Activated CD4-positive, alpha-beta T cell treated with anti-CD3 and anti-CD28 coated beads for 36 hours (primary cell): ENCODE measurements at regions of chr5 and their contacts with region 1.

Region 1: GRCh38 chr5:81971712-81972495 is at the start of gene ATG10:
- DNase-seq: peak; percentile 93
- ATAC-seq: peak; percentile 95
- H3K4me3 Mint-ChIP-seq: peak within 1 kb of the TSS; percentile 96
- H3K27ac Mint-ChIP-seq: peak within 1 kb of the TSS; percentile 99
- H3K4me1 Mint-ChIP-seq: peaks cover 22% of the 10 kb centered on the region
- H3K27me3 Mint-ChIP-seq: no peaks in the 10 kb centered on the region
- total RNA-seq, gene ATG10: 4.7 to 8.1 TPM

Region 2: GRCh38 chr5:81006947-81007636 is 964.8 kb before region 1 on chr5:
- CTCF ChIA-PET with region 1: no interaction called
- POLR2A ChIA-PET with region 1: no interaction called
- intact Hi-C with region 1: loop called in 1 of 2 experiments (anchors 10 kb)
- DNase-seq: peak; percentile 71
- ATAC-seq: peak; percentile 83
- H3K4me3 Mint-ChIP-seq: peak overlapping the region; percentile 77
- H3K27ac Mint-ChIP-seq: peak overlapping the region; percentile 96
- H3K4me1 Mint-ChIP-seq: peaks cover 82% of the 10 kb centered on the region
- H3K27me3 Mint-ChIP-seq: no peaks in the 10 kb centered on the region

Region 3: DNA sequence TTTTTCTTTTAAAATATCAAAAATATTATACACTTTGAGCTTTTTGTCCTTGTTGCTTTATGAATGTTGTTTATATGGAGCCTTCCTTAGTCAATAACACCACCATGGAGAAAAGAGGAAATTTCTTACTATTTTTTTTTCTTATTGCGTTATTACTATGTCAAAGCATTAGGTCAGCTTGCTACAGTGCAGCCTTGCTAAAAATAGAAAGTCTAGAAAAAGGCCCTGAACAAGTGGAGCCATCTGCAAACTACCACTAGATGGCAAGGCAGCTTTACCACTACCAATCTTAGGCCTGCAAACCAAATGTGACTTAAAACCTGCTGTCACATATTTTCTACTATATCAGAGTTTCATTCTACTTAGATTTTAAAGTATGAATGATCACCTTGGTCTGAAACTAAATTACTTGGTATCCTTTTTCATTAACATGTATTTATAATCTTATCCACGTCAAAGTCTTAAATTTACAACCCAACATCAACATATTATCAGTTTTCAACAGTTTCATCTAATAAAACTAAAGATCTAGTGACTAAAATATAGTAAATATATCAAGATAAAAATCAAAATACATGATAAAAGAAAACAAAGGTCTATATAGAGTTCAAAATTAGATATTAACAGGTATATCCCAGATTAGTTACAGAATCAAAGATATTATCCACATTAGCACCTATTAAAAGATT is 464.9 kb before region 1 on chr5:
- CTCF ChIA-PET with region 1: no interaction called
- POLR2A ChIA-PET with region 1: no interaction called
- intact Hi-C with region 1: loop called in 1 of 2 experiments (anchors 2 kb)
- DNase-seq: peak; percentile 52
- ATAC-seq: peak; percentile 100
- H3K4me3 Mint-ChIP-seq: no peak overlapping the region
- H3K27ac Mint-ChIP-seq: no peak overlapping the region
- H3K4me1 Mint-ChIP-seq: no peaks in the 10 kb centered on the region
- H3K27me3 Mint-ChIP-seq: no peaks in the 10 kb centered on the region

Region 4: GRCh38 chr5:81808106-81808505 is 163.8 kb before region 1 on chr5:
- CTCF ChIA-PET with region 1: no interaction called
- POLR2A ChIA-PET with region 1: no interaction called
- intact Hi-C with region 1: no loop called
- DNase-seq: no peak
- ATAC-seq: no peak
- H3K4me3 Mint-ChIP-seq: no peak overlapping the region
- H3K27ac Mint-ChIP-seq: no peak overlapping the region
- H3K4me1 Mint-ChIP-seq: peaks cover 9% of the 10 kb centered on the region
- H3K27me3 Mint-ChIP-seq: no peaks in the 10 kb centered on the region

Region 5: GRCh38 chr5:81851481-81852178 is 120.3 kb before region 1 on chr5:
- CTCF ChIA-PET with region 1: no interaction called
- POLR2A ChIA-PET with region 1: interaction called, 3 read pairs
- intact Hi-C with region 1: loop called (anchors 1 to 2 kb)
- DNase-seq: peak; percentile 93
- ATAC-seq: peak; percentile 86
- H3K4me3 Mint-ChIP-seq: peak overlapping the region; percentile 78
- H3K27ac Mint-ChIP-seq: peak overlapping the region; percentile 94
- H3K4me1 Mint-ChIP-seq: peaks cover 42% of the 10 kb centered on the region
- H3K27me3 Mint-ChIP-seq: no peaks in the 10 kb centered on the region

Region 6: GRCh38 chr5:82165740-82166530 is 194.0 kb after region 1 on chr5:
- CTCF ChIA-PET with region 1: interaction called, 3 read pairs
- POLR2A ChIA-PET with region 1: no interaction called
- intact Hi-C with region 1: loop called in 1 of 2 experiments (anchors 5 kb)
- DNase-seq: peak; percentile 53
- ATAC-seq: peak; percentile 99
- H3K4me3 Mint-ChIP-seq: no peak overlapping the region
- H3K27ac Mint-ChIP-seq: no peak overlapping the region
- H3K4me1 Mint-ChIP-seq: peaks cover 14% of the 10 kb centered on the region
- H3K27me3 Mint-ChIP-seq: no peaks in the 10 kb centered on the region

Region 7: GRCh38 chr5:82694886-82695285 is 723.0 kb after region 1 on chr5:
- CTCF ChIA-PET with region 1: no interaction called
- POLR2A ChIA-PET with region 1: no interaction called
- intact Hi-C with region 1: no loop called
- DNase-seq: no peak
- ATAC-seq: no peak
- H3K4me3 Mint-ChIP-seq: no peak overlapping the region
- H3K27ac Mint-ChIP-seq: no peak overlapping the region
- H3K4me1 Mint-ChIP-seq: no peaks in the 10 kb centered on the region
- H3K27me3 Mint-ChIP-seq: peaks cover 2% of the 10 kb centered on the region